Mammary epithelial cell (primary cell): ENCODE measurements at regions of chr3 and their contacts with region 1.

Region 1: DNA sequence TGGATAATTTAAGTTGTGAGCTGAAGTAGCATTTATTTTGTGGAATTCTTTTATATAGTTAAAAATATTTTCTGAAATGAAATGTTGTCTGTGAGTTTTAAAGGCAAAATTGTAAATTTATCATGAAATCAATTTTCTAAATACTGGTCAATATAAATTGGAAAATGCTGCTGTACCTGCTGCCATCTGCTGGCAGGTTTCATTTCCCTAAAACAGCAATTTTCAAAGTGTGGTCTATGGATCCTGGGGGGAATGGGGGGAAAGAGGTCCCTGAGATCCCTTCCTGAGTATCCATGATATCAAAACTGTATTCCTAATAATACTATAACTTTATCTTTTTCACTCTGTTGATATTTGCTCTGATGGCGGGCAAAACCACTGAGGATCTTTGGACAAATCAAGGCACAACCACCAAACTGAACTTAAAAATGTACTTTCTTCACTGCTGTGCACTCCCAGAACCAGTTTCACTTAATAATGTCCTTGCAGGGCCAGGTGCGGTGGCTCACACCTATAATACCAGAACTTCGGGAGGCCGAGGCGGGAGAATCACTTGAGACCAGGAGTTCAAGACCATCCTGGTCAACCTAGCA is 17.2 kb upstream of the CCR4 start:
- DNase-seq: no peak
- H3K4me3 ChIP-seq: no peak overlapping the region
- H3K27ac ChIP-seq: no peak overlapping the region
- H3K4me1 ChIP-seq: no peaks in the 10 kb centered on the region
- H3K27me3 ChIP-seq: no peaks in the 10 kb centered on the region
- CTCF ChIP-seq: peak; percentile 68 to 76

Region 2: GRCh38 chr3:32510075-32510724 is 424.0 kb before region 1 on chr3:
- CTCF ChIA-PET with region 1: no interaction called
- dilution Hi-C with region 1: no loop called
- in situ Hi-C with region 1: no loop called
- intact Hi-C with region 1: loop called (anchors 2 kb)
- DNase-seq: peak; percentile 52
- H3K4me3 ChIP-seq: no peak overlapping the region
- H3K27ac ChIP-seq: no peak overlapping the region
- H3K4me1 ChIP-seq: no peaks in the 10 kb centered on the region
- H3K27me3 ChIP-seq: no peaks in the 10 kb centered on the region
- CTCF ChIP-seq: peak; percentile 63 to 79

Region 3: GRCh38 chr3:32733631-32734229 is 200.5 kb before region 1 on chr3:
- CTCF ChIA-PET with region 1: no interaction called
- dilution Hi-C with region 1: no loop called
- in situ Hi-C with region 1: loop called (anchors 10 kb)
- intact Hi-C with region 1: loop called (anchors 1 kb)
- DNase-seq: no peak
- H3K4me3 ChIP-seq: no peak overlapping the region
- H3K27ac ChIP-seq: no peak overlapping the region
- H3K4me1 ChIP-seq: no peaks in the 10 kb centered on the region
- H3K27me3 ChIP-seq: no peaks in the 10 kb centered on the region
- CTCF ChIP-seq: peak; percentile 55 to 63

Region 4: DNA sequence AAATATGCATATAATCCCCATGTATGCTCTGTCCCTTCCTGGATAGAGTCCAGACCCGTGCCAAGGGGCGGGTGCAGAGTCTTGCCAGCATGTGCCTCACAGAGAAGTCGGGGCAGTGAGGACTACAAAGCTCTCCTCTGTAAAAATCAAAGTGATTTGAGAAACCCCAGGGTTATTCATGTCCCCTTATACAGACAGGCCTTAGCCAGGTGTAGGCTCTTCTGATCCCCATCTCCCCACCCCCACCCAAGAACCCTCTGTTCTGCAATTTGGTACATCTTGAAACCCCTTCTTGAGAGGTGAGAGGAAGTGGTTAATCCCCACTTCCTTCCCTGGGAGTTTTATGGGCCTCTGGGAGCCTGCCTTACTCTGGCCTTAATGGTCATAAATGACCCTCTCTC is 91.7 kb before region 1 on chr3:
- CTCF ChIA-PET with region 1: no interaction called
- dilution Hi-C with region 1: loop called (anchors 5 kb)
- in situ Hi-C with region 1: no loop called
- intact Hi-C with region 1: no loop called
- DNase-seq: no peak
- H3K4me3 ChIP-seq: no peak overlapping the region
- H3K27ac ChIP-seq: no peak overlapping the region
- H3K4me1 ChIP-seq: no peaks in the 10 kb centered on the region
- H3K27me3 ChIP-seq: no peaks in the 10 kb centered on the region
- CTCF ChIP-seq: no peak